Dendritic cell treated with granulocyte-macrophage colony-stimulating factor and Interleukin-4, amounts not matched to agents 40 ng/mL and 50 ng/mL, for 4 days (primary cell): ENCODE measurements at regions of chr21 and their contacts with region 1.

Region 1: GRCh38 chr21:42097860-42098454 is 26.8 kb downstream of the UMODL1 start:
- H3K4me3 Mint-ChIP-seq: no peak overlapping the region
- H3K27ac Mint-ChIP-seq: peak overlapping the region; percentile 75
- H3K4me1 Mint-ChIP-seq: peaks cover 33% of the 10 kb centered on the region
- H3K27me3 Mint-ChIP-seq: peaks cover 9% of the 10 kb centered on the region

Region 2: DNA sequence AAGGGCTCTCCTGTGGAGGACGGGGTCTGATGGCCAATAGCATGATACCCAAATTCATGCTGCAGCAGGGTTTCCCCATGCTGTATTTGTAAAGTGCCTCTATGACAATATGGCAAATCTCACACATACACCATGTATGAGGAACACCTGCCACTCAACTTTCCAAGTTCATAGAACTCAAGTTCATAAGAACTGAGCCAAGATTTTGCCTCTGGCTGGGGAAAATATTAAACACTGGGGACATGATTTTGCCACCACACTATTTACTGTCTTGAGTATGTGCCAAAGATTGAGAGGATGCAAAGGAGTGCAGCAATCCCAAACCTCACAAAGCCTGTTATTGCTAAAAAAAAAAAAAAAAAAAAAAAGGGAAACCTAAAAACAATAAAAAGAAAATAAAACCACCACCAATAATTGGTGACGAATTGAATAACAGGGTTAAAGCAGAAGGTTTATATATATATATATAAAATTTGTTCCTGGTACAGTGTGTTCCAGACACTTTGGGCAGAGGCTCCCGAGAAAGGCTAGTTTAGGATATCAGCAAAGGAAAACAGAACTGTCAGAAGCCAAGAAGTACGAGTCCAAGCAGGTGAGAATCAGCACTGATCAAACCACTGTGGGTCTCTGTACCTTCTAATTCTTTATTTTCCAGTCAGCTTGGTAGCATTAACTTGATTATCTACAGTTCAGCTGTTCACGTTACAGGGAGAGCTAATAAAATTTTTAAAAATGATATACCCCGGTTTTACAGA is 112.1 kb before region 1 on chr21:
- intact Hi-C with region 1: no loop called
- H3K4me3 Mint-ChIP-seq: no peak overlapping the region
- H3K27ac Mint-ChIP-seq: no peak overlapping the region
- H3K4me1 Mint-ChIP-seq: no peaks in the 10 kb centered on the region
- H3K27me3 Mint-ChIP-seq: peaks cover 7% of the 10 kb centered on the region

Region 3: DNA sequence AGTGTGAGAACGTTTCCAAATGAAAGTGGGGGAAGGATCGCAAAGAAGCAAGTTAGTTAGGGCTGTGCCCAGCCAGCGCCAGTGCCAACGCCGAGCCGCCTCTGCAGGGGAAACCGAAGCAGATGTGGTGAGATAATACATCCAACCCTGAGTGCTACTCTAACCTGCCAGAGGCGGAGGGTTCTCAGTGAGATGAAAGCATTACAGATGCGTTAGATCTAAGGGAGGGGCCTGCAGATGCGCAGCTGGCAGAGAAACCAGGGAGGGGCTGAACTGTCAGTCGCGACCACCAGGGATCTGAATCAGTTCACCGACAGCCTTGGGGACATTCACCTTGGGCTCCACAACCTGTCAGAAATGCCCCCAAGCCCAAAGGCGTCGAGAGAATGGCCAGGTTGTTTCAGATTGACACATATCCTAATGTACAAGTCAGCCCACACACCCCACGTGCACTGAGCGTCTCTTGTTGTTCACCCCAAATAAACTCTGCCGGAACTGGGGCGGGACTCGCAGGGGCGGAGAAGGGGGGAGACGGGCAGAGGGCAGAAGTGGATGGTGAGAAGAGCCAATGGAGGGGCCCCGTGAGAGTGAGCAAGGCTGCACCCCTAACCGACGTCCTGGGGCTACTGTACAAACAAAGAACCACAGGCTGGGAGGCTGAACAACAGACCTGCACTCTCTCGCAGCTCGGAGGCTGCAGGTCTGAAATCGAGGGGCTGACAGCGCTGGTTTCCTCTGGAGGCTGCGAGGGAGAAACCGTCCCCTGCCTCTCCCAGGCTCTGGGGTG is 35.5 kb before region 1 on chr21:
- intact Hi-C with region 1: loop called (anchors 5 kb)
- H3K4me3 Mint-ChIP-seq: peak overlapping the region; percentile 63
- H3K27ac Mint-ChIP-seq: peak overlapping the region; percentile 97
- H3K4me1 Mint-ChIP-seq: peaks cover 85% of the 10 kb centered on the region
- H3K27me3 Mint-ChIP-seq: no peaks in the 10 kb centered on the region